ENCODE measurements at regions of chr13 and their contacts with region 1.

Region 1: DNA sequence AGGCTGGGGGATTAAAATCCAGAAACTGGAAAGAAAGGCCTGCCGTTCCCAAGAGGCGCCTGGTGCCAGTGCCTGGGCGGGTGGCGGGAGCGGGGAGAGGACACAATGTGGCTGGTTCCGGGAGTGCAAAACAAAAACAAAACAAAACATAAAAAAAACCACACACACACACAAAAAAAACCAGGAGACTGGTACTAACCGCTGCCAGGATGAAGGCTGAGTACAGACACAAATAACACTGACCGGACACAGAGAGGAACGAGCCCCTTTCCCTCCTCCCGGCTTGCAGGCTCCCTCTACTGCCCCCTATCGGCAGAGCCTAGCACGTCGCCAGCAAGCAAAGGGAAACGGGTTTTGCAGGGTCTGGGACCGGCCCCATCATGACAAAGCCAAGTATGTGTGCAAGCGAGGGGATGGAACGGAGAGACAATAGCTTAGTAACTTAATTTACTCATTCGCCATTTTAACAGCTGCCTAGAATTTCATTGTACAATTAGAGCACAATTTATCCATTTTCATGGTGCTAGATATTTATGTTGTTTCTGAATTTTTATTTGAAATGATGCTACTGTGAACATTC is 17.9 kb upstream of the ZDHHC20 start:
- DNase-seq: peak; percentile 62
- ATAC-seq: peak; percentile 92
- H3K4me3 Mint-ChIP-seq: peak overlapping the region; percentile 87
- H3K27ac Mint-ChIP-seq: no peak overlapping the region
- H3K4me1 Mint-ChIP-seq: peaks cover 13% of the 10 kb centered on the region
- H3K27me3 Mint-ChIP-seq: no peaks in the 10 kb centered on the region
- CTCF ChIP-seq: peak; percentile 36

Region 2: GRCh38 chr13:20945952-20946383 is 531.0 kb before region 1 on chr13:
- CTCF ChIA-PET with region 1: interaction called, 38 read pairs
- POLR2A ChIA-PET with region 1: no interaction called
- intact Hi-C with region 1: loop called (anchors 1 kb)
- DNase-seq: no peak
- ATAC-seq: no peak
- H3K4me3 Mint-ChIP-seq: peak overlapping the region; percentile 28
- H3K27ac Mint-ChIP-seq: no peak overlapping the region
- H3K4me1 Mint-ChIP-seq: peaks cover 6% of the 10 kb centered on the region
- H3K27me3 Mint-ChIP-seq: peaks cover 37% of the 10 kb centered on the region
- CTCF ChIP-seq: no peak

Region 3: GRCh38 chr13:21106089-21106488 is 370.9 kb before region 1 on chr13:
- CTCF ChIA-PET with region 1: interaction called, 42 read pairs
- POLR2A ChIA-PET with region 1: no interaction called
- intact Hi-C with region 1: loop called (anchors 1 kb)
- DNase-seq: no peak
- ATAC-seq: no peak
- H3K4me3 Mint-ChIP-seq: no peak overlapping the region
- H3K27ac Mint-ChIP-seq: no peak overlapping the region
- H3K4me1 Mint-ChIP-seq: no peaks in the 10 kb centered on the region
- H3K27me3 Mint-ChIP-seq: no peaks in the 10 kb centered on the region
- CTCF ChIP-seq: no peak

Region 4: DNA sequence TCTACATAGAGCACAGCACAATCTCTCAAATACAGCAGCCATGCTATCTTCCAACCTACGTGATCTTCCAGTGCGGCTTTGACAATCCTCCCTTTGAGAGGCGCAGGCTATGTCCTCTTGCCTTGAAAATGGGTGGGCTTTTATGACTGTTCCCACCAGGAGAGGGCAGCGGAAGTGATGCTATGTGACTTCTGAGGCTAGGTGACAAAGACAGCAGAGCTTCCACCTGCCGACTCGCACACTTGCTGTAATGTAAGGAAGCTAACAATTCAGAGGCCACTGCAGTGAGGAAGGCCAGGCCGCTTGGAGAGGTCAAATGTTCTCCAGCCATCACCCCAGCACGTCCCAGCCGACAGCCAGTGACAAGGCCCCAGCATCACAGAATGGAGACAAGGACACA is 234.7 kb before region 1 on chr13:
- CTCF ChIA-PET with region 1: interaction called, 4 read pairs
- POLR2A ChIA-PET with region 1: no interaction called
- intact Hi-C with region 1: loop called (anchors 1 kb)
- DNase-seq: no peak
- ATAC-seq: no peak
- H3K4me3 Mint-ChIP-seq: no peak overlapping the region
- H3K27ac Mint-ChIP-seq: no peak overlapping the region
- H3K4me1 Mint-ChIP-seq: no peaks in the 10 kb centered on the region
- H3K27me3 Mint-ChIP-seq: no peaks in the 10 kb centered on the region
- CTCF ChIP-seq: no peak

Region 5: GRCh38 chr13:21402586-21403228 is 74.3 kb before region 1 on chr13:
- CTCF ChIA-PET with region 1: interaction called, 4 read pairs
- POLR2A ChIA-PET with region 1: no interaction called
- intact Hi-C with region 1: loop called (anchors 5 kb)
- DNase-seq: no peak
- ATAC-seq: no peak
- H3K4me3 Mint-ChIP-seq: no peak overlapping the region
- H3K27ac Mint-ChIP-seq: no peak overlapping the region
- H3K4me1 Mint-ChIP-seq: no peaks in the 10 kb centered on the region
- H3K27me3 Mint-ChIP-seq: no peaks in the 10 kb centered on the region
- CTCF ChIP-seq: no peak

Region 6: DNA sequence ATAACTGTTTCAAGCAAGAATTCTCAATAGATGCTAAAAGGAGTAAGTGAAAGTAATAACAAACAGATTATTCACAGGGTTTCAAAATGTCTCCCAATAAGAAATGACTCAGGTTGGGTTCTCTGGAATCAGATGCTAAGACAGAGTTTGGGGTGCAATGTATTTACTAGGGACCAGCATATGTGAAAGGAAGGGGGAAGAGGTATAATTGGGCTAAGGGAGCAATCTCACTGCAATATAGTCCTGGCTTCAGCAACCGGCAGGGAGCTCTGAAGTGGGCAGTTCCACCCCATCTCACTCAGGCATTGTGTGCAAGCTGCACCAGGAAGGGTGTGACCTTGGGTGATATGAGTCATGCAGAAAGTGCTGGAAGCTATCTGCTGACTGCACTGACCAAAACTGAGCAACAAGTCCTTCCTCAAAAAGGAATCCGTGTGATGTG is 41.3 kb before region 1 on chr13:
- CTCF ChIA-PET with region 1: interaction called, 4 read pairs
- POLR2A ChIA-PET with region 1: interaction called, 3 read pairs
- intact Hi-C with region 1: loop called (anchors 2 kb)
- DNase-seq: peak; percentile 36
- ATAC-seq: peak; percentile 99
- H3K4me3 Mint-ChIP-seq: peak overlapping the region; percentile 67
- H3K27ac Mint-ChIP-seq: peak overlapping the region; percentile 93
- H3K4me1 Mint-ChIP-seq: peaks cover 48% of the 10 kb centered on the region
- H3K27me3 Mint-ChIP-seq: no peaks in the 10 kb centered on the region
- CTCF ChIP-seq: no peak